ENCODE measurements at regions of chr4 and their contacts with region 1.

Region 1: GRCh38 chr4:99949034-99949998 is 759 bp downstream of the H2AZ1 start:
- DNase-seq: peak; percentile 92 to 95
- H3K4me3 ChIP-seq: peak overlapping the region; percentile 40 to 64 (median 46)
- H3K27ac ChIP-seq: peak overlapping the region; percentile 67 to 82 (median 80)
- H3K4me1 ChIP-seq: peaks cover 17 to 32% of the 10 kb centered on the region in 2 donors
- H3K27me3 ChIP-seq: no peaks in the 10 kb centered on the region
- CTCF ChIP-seq: peak; percentile 43 to 91 (median 86)
- POLR2A ChIP-seq: peak in 1 of 2 donors; percentile 47

Region 2: DNA sequence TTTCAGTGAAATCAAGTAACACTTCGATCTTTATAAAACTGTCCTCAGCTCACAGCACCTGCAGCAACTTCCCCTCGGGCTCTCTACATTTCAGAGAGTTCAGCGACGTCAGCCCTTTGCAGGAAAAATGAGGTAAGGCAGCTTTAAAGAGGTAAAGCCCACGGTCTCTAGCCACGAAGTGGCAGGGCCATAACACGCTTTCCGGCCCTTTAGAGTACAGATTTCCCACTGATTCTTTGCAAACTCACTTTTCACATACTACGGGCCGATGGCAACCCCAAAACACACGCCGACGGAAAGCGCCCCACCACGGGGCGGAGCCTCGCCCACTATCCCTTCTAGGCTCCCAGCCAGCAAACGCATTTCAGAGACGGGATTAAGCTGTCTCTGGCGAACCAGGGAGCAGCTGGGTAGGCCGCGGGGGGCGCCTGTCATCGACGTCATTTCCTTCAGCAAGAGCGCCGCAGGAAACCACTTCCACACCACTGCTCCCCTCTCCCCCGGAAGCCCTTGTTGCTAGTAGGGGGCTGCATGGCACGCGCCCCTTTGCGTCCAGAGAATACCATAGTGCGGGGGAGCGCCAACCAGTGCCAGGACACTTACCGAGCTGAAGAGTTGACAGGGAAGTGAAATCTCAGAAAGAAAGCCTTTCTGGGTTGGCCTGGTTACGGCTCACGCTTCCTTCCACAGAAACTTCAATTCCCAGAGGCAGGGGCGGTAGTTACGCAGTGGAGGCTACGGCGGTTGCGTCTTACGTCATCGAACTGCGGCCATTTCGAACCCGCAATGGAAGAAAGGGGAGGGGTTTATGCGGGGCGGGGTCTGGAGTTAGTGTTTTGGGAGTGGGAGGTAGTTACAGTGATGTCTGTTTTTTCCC is 385.8 kb before region 1 on chr4 and contains the start of gene TRMT10A:
- intact Hi-C with region 1: loop called (anchors 5 kb)
- DNase-seq: peak; percentile 99
- H3K4me3 ChIP-seq: peak within 1 kb of the TSS; percentile 12 to 56 (median 48)
- H3K27ac ChIP-seq: peak within 1 kb of the TSS; percentile 94 to 96 (median 96)
- H3K4me1 ChIP-seq: peaks cover 3 to 5% of the 10 kb centered on the region in 2 donors
- H3K27me3 ChIP-seq: no peaks in the 10 kb centered on the region
- CTCF ChIP-seq: peak in 3 of 6 experiments; percentile 2 to 24 (median 16)
- POLR2A ChIP-seq: peak in 1 of 2 donors; percentile 83
- total RNA-seq, gene TRMT10A: 4.6 to 12.5 (median 6.8) TPM

Region 3: DNA sequence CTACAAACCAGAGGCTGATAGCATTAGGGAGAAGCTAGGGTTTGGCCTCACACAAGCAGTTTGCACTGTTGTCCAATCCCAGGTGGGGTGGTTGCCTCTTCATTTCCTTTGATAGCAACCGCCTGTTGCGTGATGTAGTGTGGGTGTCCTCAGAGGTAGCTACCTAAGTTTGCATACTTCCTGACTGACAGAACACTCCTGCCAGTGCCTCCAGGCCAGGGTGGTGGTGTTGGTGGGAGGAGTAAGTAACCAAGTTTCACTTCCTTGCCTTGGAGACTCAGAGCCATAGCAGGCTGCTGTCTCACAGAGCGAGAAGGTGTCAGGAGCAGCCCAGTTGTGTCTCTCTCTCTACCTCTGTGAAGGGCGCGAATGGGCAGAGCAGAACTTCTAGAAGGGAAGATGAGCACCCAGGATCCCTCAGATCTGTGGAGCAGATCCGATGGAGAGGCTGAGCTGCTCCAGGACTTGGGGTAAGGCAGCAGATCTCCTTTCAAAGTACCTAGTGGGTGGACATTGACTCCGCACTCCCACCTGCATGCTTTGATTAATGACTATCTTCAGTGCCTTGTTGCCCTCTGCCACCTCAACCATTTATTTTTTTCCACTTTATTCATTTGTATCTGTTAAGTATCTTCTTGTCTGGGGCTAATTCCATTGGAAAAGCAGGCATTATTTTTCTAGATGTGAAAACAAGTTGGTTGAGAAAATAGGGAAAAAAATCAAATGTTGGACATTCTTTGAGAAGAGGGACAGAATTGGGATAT is 132.6 kb before region 1 on chr4 and contains the start of gene DAPP1:
- intact Hi-C with region 1: loop called (anchors 10 kb)
- DNase-seq: peak; percentile 10 to 19
- H3K4me3 ChIP-seq: no peak within 1 kb of the TSS
- H3K27ac ChIP-seq: no peak within 1 kb of the TSS
- H3K4me1 ChIP-seq: peaks cover 5 to 9% of the 10 kb centered on the region in 2 donors
- H3K27me3 ChIP-seq: no peaks in the 10 kb centered on the region
- CTCF ChIP-seq: no peak
- POLR2A ChIP-seq: no peak
- total RNA-seq, gene DAPP1: 0.33 to 1.5 (median 0.70) TPM

Region 4: DNA sequence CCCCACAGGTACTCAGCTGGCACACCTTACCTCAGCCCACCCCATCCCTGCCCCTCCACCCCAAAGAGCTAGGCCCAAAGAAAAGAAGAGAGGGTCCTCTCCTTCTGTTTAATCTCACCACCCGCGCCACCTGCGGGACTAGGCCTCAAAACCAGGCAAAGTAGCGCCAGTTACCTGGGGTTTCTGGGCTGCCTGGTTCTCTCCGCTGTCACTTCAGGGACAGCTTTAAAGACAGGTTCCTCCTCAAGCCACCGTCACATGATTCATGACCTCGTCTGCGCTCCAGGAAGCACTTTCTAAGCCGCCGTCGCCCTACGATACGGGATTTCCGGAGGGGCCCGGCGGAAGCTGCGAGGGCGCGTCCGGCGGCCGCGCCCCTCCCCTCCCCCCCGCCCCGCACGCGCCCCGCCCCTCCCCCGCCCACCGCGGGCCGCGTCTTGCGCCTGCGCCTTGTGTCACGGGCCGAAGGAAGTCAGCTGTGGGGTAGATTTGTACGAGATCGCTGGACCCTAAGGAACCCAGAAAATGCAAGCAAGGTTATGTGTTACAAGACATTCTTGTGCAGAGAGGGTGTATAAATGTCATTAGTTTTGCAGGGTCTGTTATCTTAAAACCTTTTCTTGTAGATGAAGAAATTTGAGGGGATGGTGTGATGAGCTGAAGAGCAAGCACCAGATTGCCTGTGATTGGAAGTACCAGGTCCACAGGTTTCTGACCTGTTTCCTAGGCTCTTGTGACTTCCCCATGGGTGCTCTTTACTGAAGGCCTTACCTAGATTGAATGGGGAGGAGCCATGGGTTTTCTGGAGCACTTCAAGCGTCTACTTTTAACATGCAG is 54.9 kb before region 1 on chr4 and contains the start of gene LAMTOR3:
- intact Hi-C with region 1: loop called (anchors 5 kb)
- DNase-seq: peak; percentile 91
- H3K4me3 ChIP-seq: peak within 1 kb of the TSS; percentile 83 to 99 (median 99)
- H3K27ac ChIP-seq: peak within 1 kb of the TSS; percentile 75 to 83 (median 80)
- H3K4me1 ChIP-seq: peaks cover 8 to 15% of the 10 kb centered on the region in 2 donors
- H3K27me3 ChIP-seq: no peaks in the 10 kb centered on the region
- CTCF ChIP-seq: no peak
- POLR2A ChIP-seq: peak in 1 of 2 donors; percentile 48
- total RNA-seq, gene LAMTOR3: 67.5 to 103 (median 86.1) TPM

Region 5: GRCh38 chr4:100356181-100356580 is 406.9 kb after region 1 on chr4:
- intact Hi-C with region 1: no loop called
- DNase-seq: no peak
- H3K4me3 ChIP-seq: no peak overlapping the region
- H3K27ac ChIP-seq: no peak overlapping the region
- H3K4me1 ChIP-seq: no peaks in the 10 kb centered on the region
- H3K27me3 ChIP-seq: no peaks in the 10 kb centered on the region
- CTCF ChIP-seq: no peak
- POLR2A ChIP-seq: no peak

Measured in thyroid gland (tissue), 4 donors.